Colonic mucosa (tissue), 4 donors: ENCODE measurements at regions of chr13 and their contacts with region 1.

Region 1: GRCh38 chr13:46721054-46721453 is 75.9 kb downstream of the ESD start:
- DNase-seq: peak; percentile 48
- H3K4me3 ChIP-seq: no peak overlapping the region
- H3K27ac ChIP-seq: no peak overlapping the region
- H3K4me1 ChIP-seq: no peaks in the 10 kb centered on the region
- H3K27me3 ChIP-seq: no peaks in the 10 kb centered on the region
- CTCF ChIP-seq: peak; percentile 40

Region 2: DNA sequence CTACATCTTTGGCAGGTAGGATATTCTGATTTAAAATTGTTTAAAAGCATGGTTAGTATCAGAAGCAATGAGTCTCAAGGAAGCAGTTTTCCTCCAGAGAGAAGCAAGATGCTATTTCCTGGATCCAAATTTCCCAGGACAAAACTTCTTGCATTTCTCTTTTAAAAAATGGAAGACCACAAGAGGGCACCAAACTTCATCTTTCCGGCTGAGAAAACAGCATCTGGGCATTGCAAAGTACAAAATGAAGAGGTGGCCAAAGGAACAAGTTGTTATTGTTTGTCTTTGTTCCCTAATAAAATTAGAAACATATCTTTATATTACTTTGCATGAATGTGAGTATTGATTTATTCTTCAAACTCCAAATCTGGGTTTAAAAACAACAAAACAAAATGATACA is 228.1 kb before region 1 on chr13:
- intact Hi-C with region 1: loop called (anchors 2 kb)
- DNase-seq: no peak
- H3K4me3 ChIP-seq: no peak overlapping the region
- H3K27ac ChIP-seq: no peak overlapping the region
- H3K4me1 ChIP-seq: no peaks in the 10 kb centered on the region
- H3K27me3 ChIP-seq: no peaks in the 10 kb centered on the region
- CTCF ChIP-seq: peak; percentile 29